ENCODE measurements at regions of chr16 and their contacts with region 1.

Region 1: GRCh38 chr16:28897826-28898225 is 19.5 kb downstream of the ATP2A1 start:
- DNase-seq: no peak
- ATAC-seq: no peak
- H3K4me3 ChIP-seq: no peak overlapping the region
- H3K27ac ChIP-seq: no peak overlapping the region
- H3K4me1 ChIP-seq: no peaks in the 10 kb centered on the region
- H3K27me3 ChIP-seq: no peaks in the 10 kb centered on the region
- CTCF ChIP-seq: no peak
- POLR2A ChIP-seq: no peak

Region 2: GRCh38 chr16:28917095-28917494 is 19.3 kb after region 1 on chr16:
- intact Hi-C with region 1: loop called in 1 of 10 experiments (anchors 2 kb)
- DNase-seq: no peak
- ATAC-seq: no peak
- H3K4me3 ChIP-seq: no peak overlapping the region
- H3K27ac ChIP-seq: no peak overlapping the region
- H3K4me1 ChIP-seq: no peaks in the 10 kb centered on the region
- H3K27me3 ChIP-seq: no peaks in the 10 kb centered on the region
- CTCF ChIP-seq: no peak
- POLR2A ChIP-seq: no peak

Region 3: GRCh38 chr16:28950648-28951409 is 53.0 kb after region 1 on chr16 and contains the start of gene NFATC2IP:
- intact Hi-C with region 1: no loop called
- DNase-seq: peak; percentile 100
- ATAC-seq: peak; percentile 98 to 100 (median 99)
- H3K4me3 ChIP-seq: peak within 1 kb of the TSS; percentile 77 to 100 (median 90)
- H3K27ac ChIP-seq: peak within 1 kb of the TSS; percentile 79 to 94 (median 84)
- H3K4me1 ChIP-seq: peaks cover 0 to 24% (median 12%) of the 10 kb centered on the region in 12 donors
- H3K27me3 ChIP-seq: no peaks in the 10 kb centered on the region
- CTCF ChIP-seq: no peak
- POLR2A ChIP-seq: peak in 1 of 2 donors; percentile 41
- total RNA-seq, gene NFATC2IP: 11.1 to 25.3 (median 19.5) TPM

Region 4: GRCh38 chr16:30382111-30382881 is 1484.5 kb after region 1 on chr16 and contains the start of gene SEPTIN1:
- intact Hi-C with region 1: no loop called
- DNase-seq: peak in 1 of 5 donors; percentile 23
- ATAC-seq: no peak
- H3K4me3 ChIP-seq: peak within 1 kb of the TSS in 2 of 12 donors; percentile 10 to 54
- H3K27ac ChIP-seq: peak within 1 kb of the TSS in 1 of 12 donors; percentile 76
- H3K4me1 ChIP-seq: peaks cover 0 to 40% (median 10%) of the 10 kb centered on the region in 12 donors
- H3K27me3 ChIP-seq: no peaks in the 10 kb centered on the region
- CTCF ChIP-seq: no peak
- POLR2A ChIP-seq: no peak
- total RNA-seq, gene SEPTIN1: 0.67 to 9.2 (median 1.5) TPM in 8 of 9 donors, not detected in the other